SK-N-SH (cell line): ENCODE measurements at regions of chr18 and their contacts with region 1.

Region 1: GRCh38 chr18:35106845-35107148 is 65.6 kb downstream of the MAPRE2 start:
- DNase-seq: no peak
- H3K4me3 ChIP-seq: no peak overlapping the region
- H3K27ac ChIP-seq: peak overlapping the region in 1 of 2 experiments; percentile 89; a peak in 2 of 4 replicates
- H3K4me1 ChIP-seq: peaks cover 0 to 13% of the 10 kb centered on the region in 2 experiments; a peak in 1 of 4 replicates
- H3K27me3 ChIP-seq: no peaks in the 10 kb centered on the region
- CTCF ChIP-seq: no peak
- EP300 ChIP-seq: no peak
- RAD21 ChIP-seq: no peak

Region 2: GRCh38 chr18:34196256-34196655 is 910.5 kb before region 1 on chr18:
- CTCF ChIA-PET with region 1: no interaction called
- POLR2A ChIA-PET with region 1: no interaction called
- DNase-seq: no peak
- H3K4me3 ChIP-seq: no peak overlapping the region
- H3K27ac ChIP-seq: no peak overlapping the region
- H3K4me1 ChIP-seq: no peaks in the 10 kb centered on the region; a peak in 2 of 4 replicates
- H3K27me3 ChIP-seq: no peaks in the 10 kb centered on the region
- CTCF ChIP-seq: no peak
- EP300 ChIP-seq: no peak
- RAD21 ChIP-seq: no peak

Region 3: DNA sequence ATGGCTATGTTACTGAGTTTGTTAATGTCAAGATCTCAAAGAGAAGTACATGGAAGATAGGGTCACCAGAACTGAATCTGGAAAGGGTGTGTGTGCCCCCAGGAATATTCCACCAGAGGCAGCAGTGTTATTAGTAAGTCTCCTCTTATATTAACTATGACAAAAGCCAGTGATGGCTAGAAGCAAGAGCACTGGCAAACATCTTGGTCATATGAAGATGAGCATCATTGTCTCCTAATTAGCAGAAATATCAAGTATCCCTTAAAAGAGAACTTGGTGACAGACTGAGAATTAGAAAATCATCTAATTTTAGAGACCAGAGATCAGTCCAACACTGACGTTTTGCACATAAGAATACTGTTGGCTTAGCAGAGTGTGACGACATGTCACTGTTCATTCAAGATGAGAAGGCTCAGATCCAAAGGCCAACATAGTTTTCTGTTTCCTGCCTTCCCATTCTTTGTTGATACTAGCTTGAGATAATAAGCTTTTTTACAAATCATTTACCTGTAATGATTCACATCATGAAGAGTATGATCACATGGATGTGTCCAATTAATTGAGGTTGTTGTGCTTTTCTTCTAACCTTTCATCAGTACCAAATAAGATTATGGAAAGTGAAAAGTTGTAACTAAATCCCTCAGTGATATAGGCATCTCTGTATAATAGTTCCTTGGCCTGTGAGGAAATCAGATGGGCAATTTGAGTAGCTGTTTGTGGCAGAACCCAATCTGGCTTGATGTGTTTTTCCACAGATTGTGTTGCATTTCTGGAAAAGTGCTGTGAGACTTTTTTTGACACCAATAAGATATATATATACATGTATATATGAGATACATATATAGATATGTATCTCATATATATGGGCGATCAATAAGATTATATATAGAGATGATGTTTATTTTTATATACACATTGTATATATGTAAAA is 21.1 kb before region 1 on chr18:
- CTCF ChIA-PET with region 1: interaction called, 11 read pairs
- POLR2A ChIA-PET with region 1: interaction called, 3 read pairs
- DNase-seq: peak; percentile 63
- H3K4me3 ChIP-seq: no peak overlapping the region
- H3K27ac ChIP-seq: peak overlapping the region in 1 of 2 experiments; percentile 76; a peak in 2 of 4 replicates
- H3K4me1 ChIP-seq: peaks cover 16 to 22% of the 10 kb centered on the region in 2 experiments; a peak in 3 of 4 replicates
- H3K27me3 ChIP-seq: no peaks in the 10 kb centered on the region
- CTCF ChIP-seq: no peak
- EP300 ChIP-seq: peak in 1 of 2 experiments; percentile 89; a peak in 2 of 4 replicates
- RAD21 ChIP-seq: peak; percentile 8; the same call in 1 of the 2 replicates